Psoas muscle (tissue), 8 donors: ENCODE measurements at regions of chr17 and their contacts with region 1.

Region 1: GRCh38 chr17:44636562-44636961 is 19.7 kb upstream of the MEIOC start:
- DNase-seq: no peak
- ATAC-seq: peak in 1 of 4 donors; percentile 42
- H3K4me3 ChIP-seq: no peak overlapping the region
- H3K27ac ChIP-seq: no peak overlapping the region
- H3K4me1 ChIP-seq: no peaks in the 10 kb centered on the region
- H3K27me3 ChIP-seq: peaks cover 0 to 4% (median 0%) of the 10 kb centered on the region in 3 donors
- CTCF ChIP-seq: peak; percentile 40

Region 2: DNA sequence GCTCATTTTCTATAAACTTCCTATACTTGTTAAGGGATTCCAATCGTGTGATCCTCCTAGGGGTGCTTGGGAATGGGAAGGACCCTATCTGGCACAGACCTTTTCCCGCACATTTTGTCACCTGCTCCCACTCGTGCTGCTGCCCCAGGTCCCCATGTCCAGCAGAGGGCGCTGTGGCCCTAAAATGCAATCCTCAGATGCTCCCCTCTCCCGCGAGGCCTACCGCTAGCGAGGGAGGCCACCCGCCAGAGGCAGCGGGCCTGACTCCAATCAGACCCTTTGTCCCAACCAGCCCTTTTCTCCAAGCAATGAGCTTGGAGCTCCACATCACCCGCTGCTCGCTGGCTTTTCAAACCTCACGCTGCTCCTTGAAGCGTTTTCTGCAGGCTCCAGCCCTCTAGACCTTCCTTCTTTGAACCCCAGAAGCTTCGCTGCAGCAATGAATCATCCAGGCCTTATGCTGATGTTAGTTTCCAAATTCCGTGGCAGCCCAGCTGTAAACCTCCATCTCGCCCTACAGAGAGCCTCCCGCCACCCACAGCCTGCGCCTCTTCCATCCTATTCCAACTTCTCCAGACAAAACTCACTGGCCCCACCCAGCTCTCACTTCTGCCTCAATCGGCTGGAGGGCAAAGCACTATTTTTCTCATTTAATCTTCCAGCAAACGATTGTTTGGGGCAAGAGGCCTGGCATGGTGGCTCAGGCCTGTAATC is 102.9 kb before region 1 on chr17:
- intact Hi-C with region 1: loop called (anchors 2 kb)
- DNase-seq: peak; percentile 86 to 92
- ATAC-seq: peak; percentile 81 to 95 (median 88)
- H3K4me3 ChIP-seq: peak overlapping the region; percentile 22
- H3K27ac ChIP-seq: no peak overlapping the region
- H3K4me1 ChIP-seq: no peaks in the 10 kb centered on the region
- H3K27me3 ChIP-seq: no peaks in the 10 kb centered on the region
- CTCF ChIP-seq: peak; percentile 94

Region 3: GRCh38 chr17:44672479-44673093 is 36.0 kb after region 1 on chr17:
- intact Hi-C with region 1: no loop called
- DNase-seq: no peak
- ATAC-seq: no peak
- H3K4me3 ChIP-seq: no peak overlapping the region
- H3K27ac ChIP-seq: no peak overlapping the region
- H3K4me1 ChIP-seq: no peaks in the 10 kb centered on the region
- H3K27me3 ChIP-seq: no peaks in the 10 kb centered on the region
- CTCF ChIP-seq: peak; percentile 40